Heart left ventricle (tissue), 16 donors: ENCODE measurements at regions of chr16 and their contacts with region 1.

Region 1: DNA sequence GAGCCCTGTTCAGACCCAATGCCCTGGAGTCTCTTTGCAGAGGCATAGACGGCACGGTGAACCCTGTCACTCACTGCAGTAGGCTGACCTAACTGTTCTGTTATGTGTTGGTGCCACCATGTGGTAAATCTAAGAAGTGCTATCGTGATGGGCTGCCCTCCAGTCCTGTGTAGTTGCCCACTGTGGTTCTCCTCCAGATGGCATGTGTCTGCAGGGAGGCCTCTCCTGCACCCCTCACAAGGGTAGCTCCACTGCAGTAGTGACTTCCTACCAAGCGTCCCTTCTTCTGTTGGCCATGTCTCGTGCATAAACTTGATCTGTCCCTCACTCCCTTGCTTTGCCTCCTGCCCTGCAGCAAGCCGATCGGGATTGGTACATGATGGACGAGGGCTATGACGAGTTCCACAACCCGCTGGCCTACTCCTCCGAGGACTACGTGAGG is 5.8 kb downstream of the DHX38 start:
- DNase-seq: peak in 1 of 5 donors; percentile 34
- ATAC-seq: peak; percentile 63 to 89 (median 84)
- H3K4me3 ChIP-seq: no peak overlapping the region
- H3K27ac ChIP-seq: no peak overlapping the region
- H3K4me1 ChIP-seq: peaks cover 4 to 14% (median 10%) of the 10 kb centered on the region in 12 donors
- H3K27me3 ChIP-seq: no peaks in the 10 kb centered on the region
- CTCF ChIP-seq: peak; percentile 32 to 65 (median 48)
- POLR2A ChIP-seq: no peak

Region 2: DNA sequence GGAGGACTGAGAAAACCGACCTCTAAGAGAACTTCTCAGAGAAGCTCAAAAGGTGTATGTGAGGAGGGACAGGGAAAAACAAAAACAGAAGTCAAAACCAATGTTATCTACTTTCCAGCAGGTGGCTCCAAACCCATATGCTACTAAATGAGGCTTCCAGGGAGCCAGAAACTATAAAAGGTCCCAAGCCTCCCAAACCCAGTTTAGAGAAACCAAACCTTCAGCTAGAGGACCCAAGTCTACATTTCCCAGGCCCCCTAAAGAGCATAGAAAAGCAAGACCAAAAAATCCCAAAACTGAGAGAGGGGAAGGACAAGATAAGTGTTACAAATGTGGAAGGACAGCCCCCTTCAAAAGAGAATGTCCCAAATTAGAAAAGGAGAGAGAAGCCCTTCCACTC is 32.7 kb before region 1 on chr16:
- intact Hi-C with region 1: loop called in 8 of 10 experiments (anchors 1 to 2 kb)
- DNase-seq: no peak
- ATAC-seq: peak; percentile 44 to 70 (median 58)
- H3K4me3 ChIP-seq: no peak overlapping the region
- H3K27ac ChIP-seq: no peak overlapping the region
- H3K4me1 ChIP-seq: peaks cover 0 to 6% (median 0%) of the 10 kb centered on the region in 12 donors
- H3K27me3 ChIP-seq: no peaks in the 10 kb centered on the region
- CTCF ChIP-seq: peak; percentile 38 to 67 (median 54)
- POLR2A ChIP-seq: no peak

Region 3: DNA sequence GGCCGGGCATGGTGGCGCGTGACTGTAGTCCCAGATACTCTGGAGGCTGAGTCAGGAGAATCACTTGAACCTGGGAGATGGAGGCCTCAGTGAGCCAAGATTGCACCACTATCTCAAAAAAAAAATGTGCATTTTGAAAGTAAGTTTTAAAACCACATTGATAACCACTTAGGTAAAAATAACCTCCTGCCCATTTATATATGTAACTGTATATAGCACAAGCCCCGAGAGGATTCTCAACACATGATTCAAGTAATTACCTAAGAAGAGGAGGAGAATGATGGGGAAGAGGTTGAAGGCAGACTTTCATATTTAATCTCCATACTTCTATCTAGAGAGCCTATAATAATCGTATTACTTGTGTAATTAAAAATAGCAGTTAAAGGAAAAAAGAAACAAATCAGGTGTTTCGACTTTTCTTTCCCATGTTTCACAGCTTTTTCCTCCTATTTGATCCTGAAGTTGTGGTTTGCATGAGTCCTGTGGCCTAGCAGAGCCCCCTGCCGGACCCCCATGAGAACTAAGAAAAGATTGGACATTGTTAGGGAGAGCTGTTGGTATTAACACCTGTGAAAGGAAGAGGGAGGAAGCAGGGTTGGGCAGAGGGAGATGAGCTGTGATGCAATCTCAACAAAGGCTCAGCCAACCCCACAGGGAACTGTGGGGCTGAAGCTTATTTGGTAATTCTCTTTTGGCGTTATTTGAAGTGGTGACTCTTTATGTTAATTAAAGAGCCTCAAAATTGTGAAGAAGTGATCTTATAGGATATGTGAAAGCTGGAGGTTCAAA is 50.5 kb after region 1 on chr16:
- intact Hi-C with region 1: no loop called
- DNase-seq: no peak
- ATAC-seq: no peak
- H3K4me3 ChIP-seq: no peak overlapping the region
- H3K27ac ChIP-seq: no peak overlapping the region
- H3K4me1 ChIP-seq: no peaks in the 10 kb centered on the region
- H3K27me3 ChIP-seq: no peaks in the 10 kb centered on the region
- CTCF ChIP-seq: no peak
- POLR2A ChIP-seq: no peak